Activated CD4-positive, alpha-beta T cell treated with anti-CD3 and anti-CD28 coated beads for 36 hours (primary cell): ENCODE measurements at regions of chr22 and their contacts with region 1.

Region 1: DNA sequence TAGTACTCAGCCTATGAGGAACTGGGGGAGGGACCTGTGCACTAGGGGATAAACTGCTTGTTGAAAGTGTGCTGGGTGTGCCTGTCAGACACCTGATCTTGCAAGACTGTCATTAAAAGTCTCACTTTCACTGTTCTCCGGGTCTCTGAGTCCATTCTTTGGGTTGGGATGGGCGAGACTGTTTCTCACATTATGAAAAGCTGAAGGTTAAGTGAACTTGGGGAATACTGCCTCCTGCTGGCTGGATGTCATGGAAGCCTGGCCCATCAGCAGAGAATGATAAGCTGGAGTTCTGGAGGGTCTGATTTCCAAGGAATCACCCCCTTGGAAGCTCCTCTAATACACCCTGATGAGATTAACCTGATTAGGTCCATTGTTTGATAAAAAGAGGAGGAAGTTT is 9.0 kb upstream of the VPREB1 start:
- DNase-seq: peak; percentile 81
- ATAC-seq: peak; percentile 66
- H3K4me3 Mint-ChIP-seq: no peak overlapping the region
- H3K27ac Mint-ChIP-seq: peak overlapping the region; percentile 0
- H3K4me1 Mint-ChIP-seq: peaks cover 3% of the 10 kb centered on the region
- H3K27me3 Mint-ChIP-seq: peaks cover 3% of the 10 kb centered on the region

Region 2: DNA sequence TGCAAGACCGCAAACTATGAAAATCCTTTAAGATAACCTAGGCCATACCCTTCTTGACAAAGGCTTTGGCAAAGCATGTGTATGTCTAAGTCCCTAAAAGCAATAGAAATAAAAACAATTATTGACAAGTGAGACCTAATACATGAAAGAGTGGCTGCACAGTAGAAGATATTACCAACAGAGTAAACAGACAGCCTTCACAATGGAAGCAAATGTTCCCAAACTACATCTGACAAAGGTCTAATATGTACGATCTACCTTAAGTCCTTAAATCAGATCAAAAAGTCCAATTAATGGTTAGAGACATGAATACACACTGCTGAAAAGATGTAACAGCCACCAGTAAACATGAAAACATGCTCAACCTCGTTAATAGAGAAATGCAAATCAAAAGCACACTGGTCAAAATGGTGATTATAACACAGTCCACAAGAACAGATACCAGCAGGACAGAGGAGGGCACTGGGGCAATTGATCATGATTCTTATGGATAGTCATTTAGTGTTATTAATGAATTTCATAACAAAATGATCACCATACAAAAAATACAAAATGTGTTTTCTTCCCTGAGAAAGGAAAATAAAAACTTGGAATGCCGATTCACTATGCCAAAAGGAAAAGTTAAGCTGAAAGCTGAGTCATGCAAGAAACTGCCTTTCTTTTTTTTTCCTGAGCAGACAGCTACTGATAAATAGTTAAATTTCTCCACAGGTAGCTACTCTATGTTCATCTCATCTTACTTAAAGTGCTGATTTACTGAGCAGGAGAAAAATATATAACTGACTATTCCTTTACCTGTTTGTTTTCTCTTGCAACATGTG is 93.6 kb before region 1 on chr22:
- CTCF ChIA-PET with region 1: no interaction called
- POLR2A ChIA-PET with region 1: no interaction called
- intact Hi-C with region 1: no loop called
- DNase-seq: no peak
- ATAC-seq: no peak
- H3K4me3 Mint-ChIP-seq: no peak overlapping the region
- H3K27ac Mint-ChIP-seq: no peak overlapping the region
- H3K4me1 Mint-ChIP-seq: no peaks in the 10 kb centered on the region
- H3K27me3 Mint-ChIP-seq: peaks cover 28% of the 10 kb centered on the region

Region 3: GRCh38 chr22:22181341-22181850 is 54.2 kb before region 1 on chr22:
- CTCF ChIA-PET with region 1: interaction called, 10 read pairs
- POLR2A ChIA-PET with region 1: no interaction called
- intact Hi-C with region 1: no loop called
- DNase-seq: no peak
- ATAC-seq: no peak
- H3K4me3 Mint-ChIP-seq: no peak overlapping the region
- H3K27ac Mint-ChIP-seq: no peak overlapping the region
- H3K4me1 Mint-ChIP-seq: no peaks in the 10 kb centered on the region
- H3K27me3 Mint-ChIP-seq: peaks cover 29% of the 10 kb centered on the region

Region 4: GRCh38 chr22:22195265-22196017 is 40.1 kb before region 1 on chr22:
- CTCF ChIA-PET with region 1: interaction called, 313 read pairs
- POLR2A ChIA-PET with region 1: no interaction called
- intact Hi-C with region 1: no loop called
- DNase-seq: peak; percentile 92
- ATAC-seq: peak; percentile 94
- H3K4me3 Mint-ChIP-seq: no peak overlapping the region
- H3K27ac Mint-ChIP-seq: no peak overlapping the region
- H3K4me1 Mint-ChIP-seq: no peaks in the 10 kb centered on the region
- H3K27me3 Mint-ChIP-seq: peaks cover 13% of the 10 kb centered on the region

Region 5: DNA sequence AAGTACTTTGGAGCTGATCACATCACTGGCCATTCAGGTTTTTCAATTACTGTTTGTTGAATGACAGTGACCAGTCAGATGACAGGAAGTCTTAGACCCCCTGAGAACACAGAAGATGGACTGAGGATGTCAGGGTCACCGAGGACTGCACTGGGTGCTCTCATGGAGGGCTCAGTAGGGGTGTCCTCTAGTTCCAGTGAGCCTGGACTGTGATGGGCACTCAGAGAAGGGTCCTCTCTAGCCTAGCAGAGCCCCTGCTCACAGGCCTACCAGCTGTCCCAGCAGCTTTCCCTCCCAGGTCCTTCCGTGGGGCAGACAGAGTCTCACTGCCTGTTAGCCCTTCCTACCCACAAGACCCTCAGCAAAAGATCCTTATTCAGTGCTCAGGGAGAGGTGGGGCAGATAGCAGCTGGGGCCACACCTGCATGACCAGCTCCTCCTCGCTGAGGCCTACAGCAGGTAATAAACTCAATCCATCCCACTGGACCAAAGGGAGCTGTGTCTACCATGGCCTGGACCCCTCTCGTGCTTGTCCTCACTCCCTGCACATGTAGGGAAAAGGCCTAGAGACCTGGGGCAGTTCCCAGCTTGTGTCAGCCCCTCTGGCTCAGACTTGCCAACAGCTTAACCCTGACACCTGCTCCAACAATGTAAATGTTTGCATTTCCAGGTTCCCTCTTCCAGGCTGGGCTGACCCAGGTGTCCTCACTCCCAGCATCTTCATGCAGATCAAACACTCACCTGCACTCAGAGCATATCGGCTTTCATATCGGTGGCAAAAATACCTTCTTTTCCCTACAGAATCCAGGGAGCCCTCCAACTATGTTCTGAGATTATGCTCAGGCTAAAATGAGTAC is 16.2 kb before region 1 on chr22:
- CTCF ChIA-PET with region 1: interaction called, 313 read pairs
- POLR2A ChIA-PET with region 1: no interaction called
- intact Hi-C with region 1: no loop called
- DNase-seq: no peak
- ATAC-seq: no peak
- H3K4me3 Mint-ChIP-seq: no peak overlapping the region
- H3K27ac Mint-ChIP-seq: no peak overlapping the region
- H3K4me1 Mint-ChIP-seq: peaks cover 7% of the 10 kb centered on the region
- H3K27me3 Mint-ChIP-seq: no peaks in the 10 kb centered on the region